ENCODE measurements at regions of chr13 and their contacts with region 1.

Region 1: GRCh38 chr13:111114362-111115060 is 599 bp upstream of the ARHGEF7 start:
- DNase-seq: peak; percentile 44
- ATAC-seq: peak; percentile 66
- H3K4me3 Mint-ChIP-seq: peak overlapping the region; percentile 75
- H3K27ac Mint-ChIP-seq: no peak overlapping the region
- H3K4me1 Mint-ChIP-seq: peaks cover 12% of the 10 kb centered on the region
- H3K27me3 Mint-ChIP-seq: peaks cover 66% of the 10 kb centered on the region

Region 2: DNA sequence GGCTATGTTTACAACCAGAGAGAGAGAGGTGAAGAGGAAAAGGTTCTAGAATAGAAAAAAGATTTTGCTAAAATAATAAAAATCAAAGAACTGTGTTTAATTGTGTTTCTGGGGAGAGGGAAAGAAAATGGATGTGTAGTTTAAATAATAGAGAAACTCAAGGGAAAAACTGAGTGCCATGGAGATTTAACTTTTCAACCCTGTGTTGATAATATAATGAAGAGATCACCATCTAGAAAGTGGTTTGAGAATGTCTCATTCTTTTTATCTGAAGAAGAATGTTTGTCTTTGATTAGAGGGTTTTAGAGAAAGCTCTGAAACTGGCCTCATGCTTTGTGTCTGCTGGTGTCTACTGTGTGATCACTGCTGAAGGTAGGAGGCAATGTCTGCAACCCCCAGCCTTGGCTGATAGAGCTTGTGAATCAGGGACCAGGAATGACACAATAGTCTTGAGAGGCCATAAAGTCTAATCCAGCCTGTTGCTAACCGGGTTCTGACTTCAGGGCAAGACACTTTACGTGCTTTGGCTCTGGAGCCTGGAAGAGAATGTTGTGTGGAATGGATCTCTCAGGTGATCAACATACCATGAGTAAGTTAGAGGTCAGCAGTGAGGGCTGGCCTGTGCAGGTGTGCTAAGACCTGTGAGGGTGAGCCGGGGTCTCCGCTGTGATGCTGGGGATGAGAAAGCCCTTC is 802.0 kb before region 1 on chr13:
- CTCF ChIA-PET with region 1: no interaction called
- POLR2A ChIA-PET with region 1: no interaction called
- intact Hi-C with region 1: loop called in 1 of 2 experiments (anchors 5 kb)
- DNase-seq: no peak
- ATAC-seq: no peak
- H3K4me3 Mint-ChIP-seq: no peak overlapping the region
- H3K27ac Mint-ChIP-seq: peak overlapping the region; percentile 5
- H3K4me1 Mint-ChIP-seq: peaks cover 11% of the 10 kb centered on the region
- H3K27me3 Mint-ChIP-seq: peaks cover 62% of the 10 kb centered on the region

Region 3: GRCh38 chr13:110726726-110727125 is 387.8 kb before region 1 on chr13:
- CTCF ChIA-PET with region 1: no interaction called
- POLR2A ChIA-PET with region 1: no interaction called
- intact Hi-C with region 1: no loop called
- DNase-seq: peak; percentile 84
- ATAC-seq: peak; percentile 96
- H3K4me3 Mint-ChIP-seq: peak overlapping the region; percentile 19
- H3K27ac Mint-ChIP-seq: peak overlapping the region; percentile 64
- H3K4me1 Mint-ChIP-seq: peaks cover 27% of the 10 kb centered on the region
- H3K27me3 Mint-ChIP-seq: no peaks in the 10 kb centered on the region

Measured in activated CD4-positive, alpha-beta T cell treated with anti-CD3 and anti-CD28 coated beads for 36 hours (primary cell).